CD8-positive, alpha-beta memory T cell (primary cell): ENCODE measurements at regions of chr2 and their contacts with region 1.

Region 1: DNA sequence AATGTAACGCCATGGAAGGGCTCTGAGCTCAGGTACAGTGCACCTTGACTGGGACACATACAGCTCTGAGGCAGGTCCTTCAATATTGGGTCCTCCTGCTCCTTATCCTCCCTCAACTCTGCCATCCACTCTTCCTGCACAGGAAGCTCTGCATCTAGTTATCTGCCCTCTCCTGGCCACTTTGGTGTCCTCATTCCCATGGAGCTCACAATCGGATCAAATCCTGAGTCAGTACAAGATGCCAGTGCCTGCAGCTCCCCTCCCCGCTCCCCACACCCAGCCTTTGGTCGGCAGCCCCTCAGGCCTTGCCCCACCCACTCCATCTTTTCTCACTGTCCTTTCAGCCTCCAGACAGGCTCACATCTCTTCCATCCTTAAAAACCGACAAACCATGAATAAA is 58.0 kb downstream of the LRRFIP1 start:
- DNase-seq: no peak
- H3K4me3 ChIP-seq: no peak overlapping the region
- H3K4me3 Mint-ChIP-seq: no peak overlapping the region
- H3K27ac ChIP-seq: no peak overlapping the region
- H3K27ac Mint-ChIP-seq: peak overlapping the region in 6 of 8 donors; percentile 31 to 100 (median 99)
- H3K4me1 ChIP-seq: peaks cover 44% of the 10 kb centered on the region
- H3K4me1 Mint-ChIP-seq: peaks cover 40 to 51% (median 49%) of the 10 kb centered on the region in 3 donors
- H3K27me3 ChIP-seq: no peaks in the 10 kb centered on the region
- H3K27me3 Mint-ChIP-seq: peaks cover 0 to 1% of the 10 kb centered on the region in 2 donors

Region 2: DNA sequence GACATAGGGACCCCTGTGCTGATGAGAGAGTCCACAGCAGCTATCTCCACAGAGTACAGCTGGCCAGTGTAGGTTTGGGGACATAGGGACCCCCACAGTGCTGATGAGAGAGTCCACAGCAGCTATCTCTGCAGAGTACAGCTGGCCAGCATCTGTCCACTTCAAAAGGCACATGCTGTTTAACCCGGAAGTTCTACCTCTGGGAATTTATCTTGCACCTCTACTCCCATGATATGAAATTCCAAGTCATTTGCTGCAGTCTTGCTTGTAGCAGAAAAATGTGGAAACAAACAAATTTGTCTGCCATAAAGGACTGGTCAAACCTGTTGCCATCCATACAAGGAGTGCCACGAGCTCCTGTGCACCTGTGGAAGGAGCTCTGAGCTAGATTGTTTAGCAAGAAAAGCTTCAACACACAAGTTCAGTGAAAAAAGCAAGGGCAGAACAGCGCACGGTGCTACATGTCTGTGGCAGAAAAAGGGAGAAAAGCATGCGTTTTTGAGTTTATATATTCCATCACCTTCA is 25.0 kb before region 1 on chr2:
- CTCF ChIA-PET with region 1: no interaction called
- POLR2A ChIA-PET with region 1: no interaction called
- DNase-seq: no peak
- H3K4me3 ChIP-seq: no peak overlapping the region
- H3K4me3 Mint-ChIP-seq: no peak overlapping the region
- H3K27ac ChIP-seq: no peak overlapping the region
- H3K27ac Mint-ChIP-seq: no peak overlapping the region
- H3K4me1 ChIP-seq: no peaks in the 10 kb centered on the region
- H3K4me1 Mint-ChIP-seq: peaks cover 4 to 9% (median 7%) of the 10 kb centered on the region in 3 donors
- H3K27me3 ChIP-seq: peaks cover 4% of the 10 kb centered on the region
- H3K27me3 Mint-ChIP-seq: peaks cover 12 to 48% of the 10 kb centered on the region in 2 donors

Region 3: DNA sequence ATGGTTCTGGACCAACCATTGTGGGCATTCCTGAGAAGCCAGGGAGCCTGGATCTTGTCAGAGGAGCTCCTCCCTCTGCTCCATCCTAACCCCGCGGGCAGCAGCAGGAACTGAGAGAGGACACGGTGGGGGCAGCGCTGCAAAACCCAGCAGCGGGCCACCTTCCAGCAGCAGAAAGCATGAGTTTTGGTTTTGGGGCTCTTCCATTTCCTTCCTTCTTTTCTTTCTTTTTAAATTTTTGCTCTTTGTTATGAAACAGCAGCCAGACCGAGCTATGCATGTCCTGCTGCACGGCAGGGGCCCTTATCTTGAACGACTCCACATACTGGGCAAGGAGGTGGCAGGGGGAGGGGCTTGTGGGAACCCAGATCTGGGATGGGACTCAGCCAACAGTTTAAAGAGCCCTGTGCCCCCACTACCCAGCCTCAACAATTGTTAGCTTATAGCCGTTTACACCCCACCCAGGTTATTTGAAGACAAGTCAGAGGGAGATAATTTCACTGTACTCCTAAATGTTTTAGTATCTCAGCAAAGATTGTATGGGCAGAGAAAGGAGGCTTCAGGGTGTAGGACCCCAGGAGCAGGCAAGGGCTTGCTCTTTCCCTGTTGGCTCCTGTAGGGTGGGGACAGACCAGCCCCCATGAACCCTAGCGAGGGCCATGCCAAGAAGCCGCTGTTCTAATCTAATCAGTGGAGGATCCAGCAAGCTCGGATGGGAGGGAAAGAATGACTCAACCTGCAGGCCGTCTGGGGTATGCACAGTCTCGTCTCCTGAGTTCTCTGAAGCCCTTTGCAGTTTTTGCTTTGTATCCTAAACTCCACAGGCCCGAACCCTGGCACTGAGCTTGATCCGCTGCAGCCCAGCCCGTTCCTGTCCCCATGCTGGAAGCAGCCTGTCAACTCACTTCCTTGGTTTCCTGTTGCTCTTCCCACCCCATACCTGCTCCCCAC is 17.3 kb after region 1 on chr2:
- CTCF ChIA-PET with region 1: interaction called, 20 read pairs
- POLR2A ChIA-PET with region 1: interaction called, 18 read pairs
- DNase-seq: peak in 2 of 5 donors; percentile 37 to 57
- H3K4me3 ChIP-seq: peak overlapping the region; percentile 21
- H3K4me3 Mint-ChIP-seq: peak overlapping the region; percentile 51 to 84 (median 69)
- H3K27ac ChIP-seq: peak overlapping the region; percentile 44
- H3K27ac Mint-ChIP-seq: peak overlapping the region; percentile 69 to 98 (median 94)
- H3K4me1 ChIP-seq: peaks cover 98% of the 10 kb centered on the region
- H3K4me1 Mint-ChIP-seq: peaks cover 95 to 99% (median 95%) of the 10 kb centered on the region in 3 donors
- H3K27me3 ChIP-seq: no peaks in the 10 kb centered on the region
- H3K27me3 Mint-ChIP-seq: no peaks in the 10 kb centered on the region